ENCODE measurements at regions of chr10 and their contacts with region 1.

Region 1: GRCh38 chr10:15209827-15210509 is 41.5 kb upstream of the NMT2 start:
- DNase-seq: peak in 2 of 3 donors; percentile 71 to 97
- ATAC-seq: peak; percentile 82
- H3K4me3 ChIP-seq: no peak overlapping the region
- H3K4me1 ChIP-seq: no peaks in the 10 kb centered on the region
- CTCF ChIP-seq: peak; percentile 76

Region 2: GRCh38 chr10:15262036-15262713 is 52.2 kb after region 1 on chr10:
- intact Hi-C with region 1: no loop called
- DNase-seq: peak in 1 of 3 donors; percentile 64
- ATAC-seq: peak; percentile 73
- H3K4me3 ChIP-seq: no peak overlapping the region
- H3K4me1 ChIP-seq: no peaks in the 10 kb centered on the region
- CTCF ChIP-seq: peak; percentile 14

Region 3: GRCh38 chr10:15370856-15371701 is 161.1 kb after region 1 on chr10 and contains the start of gene FAM171A1:
- intact Hi-C with region 1: loop called in 1 of 2 experiments (anchors 10 kb)
- DNase-seq: peak; percentile 70 to 83 (median 77)
- ATAC-seq: peak; percentile 92
- H3K4me3 ChIP-seq: peak within 1 kb of the TSS; percentile 63
- H3K4me1 ChIP-seq: peaks cover 8% of the 10 kb centered on the region
- CTCF ChIP-seq: no peak
- total RNA-seq, gene FAM171A1: 33.7 to 60.7 (median 50.4) TPM

Region 4: GRCh38 chr10:15433850-15434537 is 224.0 kb after region 1 on chr10:
- intact Hi-C with region 1: no loop called
- DNase-seq: peak in 1 of 3 donors; percentile 65
- ATAC-seq: peak; percentile 70
- H3K4me3 ChIP-seq: no peak overlapping the region
- H3K4me1 ChIP-seq: no peaks in the 10 kb centered on the region
- CTCF ChIP-seq: no peak